Motor neuron (in vitro differentiated cells): ENCODE measurements at regions of chr17 and their contacts with region 1.

Region 1: DNA sequence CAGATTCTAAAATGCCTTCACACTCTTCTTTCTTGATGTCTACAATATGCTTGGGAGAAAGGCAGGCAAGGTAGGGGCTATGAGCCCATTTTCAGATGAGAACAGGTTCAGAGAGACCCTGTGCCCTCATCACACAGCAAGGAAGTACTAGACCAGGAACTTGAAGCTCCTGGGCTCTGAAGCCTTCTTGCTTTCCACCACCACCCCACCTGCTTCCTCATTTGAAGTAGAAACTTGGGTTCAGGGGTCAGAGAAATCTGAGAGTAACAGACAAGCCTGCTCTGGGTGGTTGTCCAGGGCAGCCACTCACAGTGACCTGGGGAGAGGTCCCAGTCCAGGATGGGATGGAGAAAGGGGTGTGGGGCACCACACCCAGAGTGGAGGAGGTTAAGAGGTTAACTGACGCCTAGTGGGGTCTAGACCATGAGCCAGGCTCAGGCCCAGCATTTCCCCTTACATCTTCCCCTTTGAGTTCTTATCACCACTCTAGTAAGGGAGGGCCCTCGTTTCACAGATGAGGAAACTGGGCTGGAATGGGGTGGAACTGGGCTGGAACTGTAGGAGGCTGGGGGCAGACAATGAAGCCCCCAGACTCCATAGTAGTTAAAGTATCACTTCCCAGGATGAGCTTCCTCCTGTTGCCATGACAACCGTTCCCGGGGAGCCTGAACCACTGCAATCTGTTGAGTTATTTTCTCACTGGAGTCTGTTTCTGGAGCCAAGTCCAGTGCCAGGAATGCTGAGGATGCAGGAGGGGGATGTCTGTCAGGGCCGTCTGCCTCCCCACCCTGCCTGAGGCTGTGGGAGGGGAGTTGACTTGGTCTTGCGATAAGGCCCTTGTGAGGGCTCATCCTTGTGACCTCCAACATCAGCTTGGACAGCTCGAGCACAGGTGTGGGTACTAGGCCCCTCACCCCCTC is 16.2 kb upstream of the PHF12 start:
- ATAC-seq: peak in 5 of 8 experiments; percentile 3 to 38 (median 15)
- H3K4me3 ChIP-seq: no peak overlapping the region
- H3K27ac ChIP-seq: peak overlapping the region; percentile 64 to 81
- H3K4me1 ChIP-seq: peaks cover 22 to 37% of the 10 kb centered on the region in 2 donors

Region 2: GRCh38 chr17:28760601-28761562 is 206.6 kb before region 1 on chr17:
- in situ Hi-C with region 1: no loop called
- ATAC-seq: no peak
- H3K4me3 ChIP-seq: no peak overlapping the region
- H3K27ac ChIP-seq: no peak overlapping the region
- H3K4me1 ChIP-seq: no peaks in the 10 kb centered on the region

Region 3: DNA sequence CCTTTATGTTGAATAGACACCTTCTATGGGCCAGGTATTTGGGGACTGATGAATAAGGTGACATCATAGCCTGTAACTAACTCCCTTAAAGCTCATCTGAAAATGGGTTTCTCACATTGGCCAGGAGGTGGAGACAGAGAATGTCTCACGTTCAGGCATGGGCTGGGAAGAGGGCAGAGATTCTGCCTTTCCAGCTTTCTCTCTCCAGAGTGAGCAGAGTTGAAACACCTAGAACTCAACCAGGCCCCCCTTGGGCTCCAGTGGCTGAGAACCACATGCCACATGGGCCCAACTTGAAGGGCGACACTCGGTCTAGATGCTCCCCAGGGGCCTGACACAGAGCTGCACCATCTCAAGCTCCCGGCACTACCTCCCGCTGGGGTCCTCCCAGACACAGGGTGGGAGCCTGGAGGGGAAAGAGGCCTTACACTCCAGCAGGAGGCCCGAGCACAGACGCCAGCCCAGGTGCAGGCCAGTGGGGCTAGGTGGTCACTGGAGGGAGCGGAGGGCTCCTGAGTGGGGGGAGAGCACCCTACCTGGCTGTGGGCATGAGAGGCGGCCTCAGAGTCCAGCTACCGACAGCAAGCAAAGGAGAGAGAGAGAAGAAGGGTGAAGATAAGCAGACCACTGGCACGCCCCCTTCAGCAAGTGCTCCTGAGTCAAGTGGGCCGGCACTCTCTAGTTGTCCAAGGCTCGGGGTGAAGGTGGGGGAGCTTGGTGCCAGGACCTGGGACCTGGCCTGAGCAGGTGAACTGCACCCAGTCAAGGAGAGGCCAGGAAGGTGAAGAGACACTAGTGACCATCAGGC is 156.8 kb after region 1 on chr17:
- in situ Hi-C with region 1: loop called in 3 of 9 experiments (anchors 10 kb)
- ATAC-seq: peak; percentile 77 to 91 (median 87)
- H3K4me3 ChIP-seq: no peak overlapping the region
- H3K27ac ChIP-seq: no peak overlapping the region
- H3K4me1 ChIP-seq: peaks cover 0 to 2% of the 10 kb centered on the region in 2 donors